ENCODE measurements at regions of chr5 and their contacts with region 1.

Region 1: DNA sequence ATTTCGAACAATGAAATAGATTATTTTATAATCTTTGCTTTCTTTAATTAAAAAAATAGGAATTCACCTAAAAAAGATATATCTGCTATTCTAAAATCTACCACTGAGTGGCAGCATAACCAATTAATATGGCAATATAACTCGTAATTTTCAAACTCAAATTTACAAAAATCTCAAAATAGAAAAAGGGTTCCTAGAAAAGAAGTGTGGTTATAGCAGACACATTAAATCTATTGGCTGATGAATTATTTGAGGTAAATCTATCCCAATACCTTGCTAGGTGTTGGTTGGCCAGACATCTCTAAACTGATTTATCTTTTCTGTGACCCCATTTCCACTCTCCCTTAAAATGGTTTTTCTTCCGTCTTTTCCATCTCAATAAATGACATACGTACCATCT is 30.2 kb upstream of the NRG2 start:
- DNase-seq: no peak
- ATAC-seq: no peak

Region 2: GRCh38 chr5:140157032-140157803 is 83.9 kb after region 1 on chr5:
- intact Hi-C with region 1: loop called (anchors 2 kb)
- DNase-seq: peak; percentile 93
- ATAC-seq: peak; percentile 98

Region 3: GRCh38 chr5:140251527-140251973 is 178.3 kb after region 1 on chr5:
- intact Hi-C with region 1: no loop called
- DNase-seq: no peak
- ATAC-seq: no peak